Panc1 (cell line): ENCODE measurements at regions of chr1 and their contacts with region 1.

Region 1: DNA sequence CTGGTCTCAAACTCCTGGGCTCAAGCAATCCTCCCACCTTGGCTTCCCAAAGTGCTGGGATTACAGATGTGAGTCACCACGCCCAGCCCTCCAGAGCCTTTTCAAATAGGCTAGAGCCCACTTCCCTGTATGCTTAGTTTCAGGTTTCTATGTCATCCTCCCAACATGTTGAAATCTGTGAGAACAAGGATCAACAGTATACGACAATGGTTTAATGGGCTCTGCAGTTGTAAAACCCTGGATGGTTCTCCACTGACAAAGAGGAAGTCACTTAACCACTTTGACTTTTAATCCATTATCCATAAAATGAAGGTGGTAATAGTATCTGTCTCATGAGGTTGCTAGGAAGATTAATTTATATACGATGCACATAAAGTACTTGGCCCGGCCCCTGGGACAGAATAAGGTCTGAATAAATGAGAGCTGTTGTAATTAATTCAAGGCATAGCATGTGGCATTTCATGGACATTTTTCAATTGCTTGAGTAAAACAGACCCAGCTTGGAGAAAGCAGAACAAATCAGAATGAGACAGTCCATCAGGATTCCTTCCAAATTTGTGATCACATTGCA is 113.9 kb upstream of the ZNF648 start:
- DNase-seq: no peak
- ATAC-seq: no peak
- H3K4me3 ChIP-seq: no peak overlapping the region
- H3K27ac ChIP-seq: no peak overlapping the region
- H3K4me1 ChIP-seq: no peaks in the 10 kb centered on the region
- H3K27me3 ChIP-seq: no peaks in the 10 kb centered on the region
- CTCF ChIP-seq: no peak

Region 2: GRCh38 chr1:182129398-182129797 is 46.0 kb before region 1 on chr1:
- CTCF ChIA-PET with region 1: no interaction called
- POLR2A ChIA-PET with region 1: no interaction called
- in situ Hi-C with region 1: no loop called
- intact Hi-C with region 1: no loop called
- DNase-seq: no peak
- ATAC-seq: no peak
- H3K4me3 ChIP-seq: no peak overlapping the region
- H3K27ac ChIP-seq: no peak overlapping the region
- H3K4me1 ChIP-seq: no peaks in the 10 kb centered on the region
- H3K27me3 ChIP-seq: no peaks in the 10 kb centered on the region
- CTCF ChIP-seq: no peak

Region 3: DNA sequence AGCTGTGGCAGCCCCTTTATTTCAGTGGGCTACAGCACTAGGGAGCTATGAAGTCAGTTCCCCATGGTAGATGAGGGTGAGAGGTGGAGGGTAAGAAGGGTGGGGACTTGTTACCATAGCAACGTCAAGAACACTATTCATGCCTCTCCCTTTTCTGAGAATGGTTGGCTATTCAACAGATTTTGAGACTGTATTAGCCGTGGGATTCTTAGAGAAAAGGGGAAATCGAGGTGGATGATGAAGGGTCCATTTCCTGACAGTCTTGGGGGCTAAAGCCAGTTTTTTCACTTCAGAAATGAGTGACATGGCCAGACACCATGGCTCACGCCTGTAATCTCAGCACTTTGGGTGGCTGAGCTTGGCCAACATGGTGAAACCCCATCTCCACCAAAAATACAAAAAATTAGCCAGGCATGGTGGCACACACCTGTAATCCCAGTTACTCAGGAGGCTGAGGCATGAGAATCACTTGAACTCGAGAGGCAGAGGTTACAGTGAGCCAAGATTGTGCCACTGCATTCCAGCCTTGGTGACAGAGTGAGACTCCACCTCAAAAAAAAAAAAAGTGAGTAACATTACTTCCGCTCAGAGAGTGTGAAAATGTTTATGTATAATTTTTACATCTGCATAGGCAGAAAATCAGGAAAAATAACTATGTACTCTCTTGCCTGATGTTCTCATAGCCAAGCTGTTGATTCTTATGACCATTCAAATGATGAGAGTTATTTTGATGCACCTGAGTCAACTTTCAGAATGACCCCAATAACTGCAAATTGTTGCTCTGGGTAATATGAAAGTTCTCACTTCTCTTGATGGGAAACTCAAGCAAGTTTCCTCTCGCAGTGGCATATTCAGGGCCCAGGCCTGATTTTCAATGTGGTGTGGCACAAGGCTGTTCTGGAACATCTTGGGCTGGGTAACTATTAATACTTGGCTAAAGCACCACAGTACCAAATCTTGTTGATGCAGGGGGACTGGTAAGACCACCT is 251.3 kb after region 1 on chr1:
- CTCF ChIA-PET with region 1: no interaction called
- POLR2A ChIA-PET with region 1: interaction called, 17 read pairs
- in situ Hi-C with region 1: no loop called
- intact Hi-C with region 1: no loop called
- DNase-seq: no peak
- ATAC-seq: no peak
- H3K4me3 ChIP-seq: no peak overlapping the region
- H3K27ac ChIP-seq: no peak overlapping the region
- H3K4me1 ChIP-seq: no peaks in the 10 kb centered on the region
- H3K27me3 ChIP-seq: no peaks in the 10 kb centered on the region
- CTCF ChIP-seq: no peak